ENCODE measurements at regions of chr2 and their contacts with region 1.

Region 1: GRCh38 chr2:39513641-39514094 is 76.6 kb upstream of the MAP4K3 start:
- DNase-seq: peak; percentile 84
- ATAC-seq: peak; percentile 83
- H3K4me3 Mint-ChIP-seq: peak overlapping the region; percentile 21
- H3K27ac Mint-ChIP-seq: peak overlapping the region; percentile 83
- H3K4me1 Mint-ChIP-seq: peaks cover 33% of the 10 kb centered on the region
- H3K27me3 Mint-ChIP-seq: peaks cover 3% of the 10 kb centered on the region

Region 2: GRCh38 chr2:39469807-39470206 is 43.9 kb before region 1 on chr2:
- CTCF ChIA-PET with region 1: no interaction called
- POLR2A ChIA-PET with region 1: no interaction called
- intact Hi-C with region 1: loop called in 1 of 2 experiments (anchors 2 kb)
- DNase-seq: peak; percentile 43
- ATAC-seq: peak; percentile 63
- H3K4me3 Mint-ChIP-seq: no peak overlapping the region
- H3K27ac Mint-ChIP-seq: no peak overlapping the region
- H3K4me1 Mint-ChIP-seq: peaks cover 36% of the 10 kb centered on the region
- H3K27me3 Mint-ChIP-seq: no peaks in the 10 kb centered on the region

Region 3: DNA sequence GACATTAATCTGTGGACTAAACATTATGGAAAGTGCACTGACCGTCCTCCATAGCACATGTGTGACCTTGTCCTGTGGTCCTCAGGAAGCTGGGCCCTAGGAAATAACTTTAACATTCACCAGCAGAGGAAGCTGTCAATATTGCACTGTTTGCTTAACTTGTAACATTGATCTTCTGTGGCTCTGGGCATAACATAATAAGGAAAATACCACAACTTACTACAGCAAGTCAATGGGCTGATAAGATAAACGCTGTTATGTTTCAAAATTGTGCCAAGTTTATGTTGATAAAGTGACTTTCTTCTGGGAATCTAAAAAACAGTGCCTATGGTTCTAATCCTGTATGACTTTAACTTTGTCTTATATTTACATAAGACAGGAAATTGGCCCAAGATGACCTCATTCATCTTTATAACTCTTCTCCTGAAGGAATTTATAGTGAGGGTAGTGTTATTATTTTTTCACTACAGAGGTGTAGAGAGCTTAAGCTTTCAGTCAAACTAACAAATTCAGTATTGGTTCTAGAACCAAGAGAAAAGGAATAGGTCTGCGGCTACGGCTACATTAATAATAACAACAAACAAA is 37.1 kb after region 1 on chr2:
- CTCF ChIA-PET with region 1: no interaction called
- POLR2A ChIA-PET with region 1: no interaction called
- intact Hi-C with region 1: no loop called
- DNase-seq: no peak
- ATAC-seq: no peak
- H3K4me3 Mint-ChIP-seq: no peak overlapping the region
- H3K27ac Mint-ChIP-seq: no peak overlapping the region
- H3K4me1 Mint-ChIP-seq: no peaks in the 10 kb centered on the region
- H3K27me3 Mint-ChIP-seq: no peaks in the 10 kb centered on the region

Region 4: DNA sequence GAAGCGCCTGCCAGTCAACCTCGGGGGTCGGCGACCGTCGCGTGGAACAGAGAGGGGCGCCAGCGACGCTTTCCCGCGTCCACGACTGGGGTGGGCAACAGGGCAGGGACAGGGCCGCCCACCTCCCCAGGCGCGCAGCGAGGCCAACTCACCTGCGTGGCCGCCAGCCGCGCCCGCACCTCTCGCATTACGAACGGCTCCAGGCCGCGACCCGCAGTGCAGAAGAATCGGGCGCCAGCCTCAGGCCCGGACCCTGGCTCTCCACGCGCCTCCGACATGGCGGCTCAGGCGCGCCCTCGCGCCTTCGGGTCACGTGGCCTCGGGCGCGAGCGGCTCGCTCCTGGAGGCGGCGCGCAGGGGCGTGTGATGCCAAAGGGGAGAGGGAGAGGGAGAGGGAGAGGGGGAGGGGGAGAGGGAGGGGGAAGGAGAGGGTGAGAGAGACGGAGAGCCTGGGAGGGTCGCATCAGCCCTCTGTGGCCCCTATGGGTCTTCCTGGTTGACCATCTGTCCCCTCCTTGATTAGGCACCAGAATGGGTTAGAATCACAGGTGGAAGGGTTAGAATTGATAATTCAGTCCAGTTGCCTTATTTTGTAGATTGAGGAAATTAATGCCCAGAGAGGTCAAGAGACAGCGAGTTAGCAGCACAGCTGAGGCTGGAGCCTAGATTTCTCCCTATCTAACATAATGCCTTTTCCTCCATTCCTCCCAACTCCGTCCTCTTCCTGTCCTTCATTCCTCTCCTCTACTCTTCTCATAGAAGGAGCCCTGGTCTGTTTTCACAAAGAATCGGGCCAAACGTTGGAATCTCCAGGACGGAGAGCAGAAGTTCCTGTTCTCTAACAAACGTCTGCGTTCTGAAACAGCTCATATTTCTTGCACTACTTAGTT is 265.5 kb after region 1 on chr2 and contains the start of gene THUMPD2:
- CTCF ChIA-PET with region 1: no interaction called
- POLR2A ChIA-PET with region 1: no interaction called
- intact Hi-C with region 1: loop called in 1 of 2 experiments (anchors 5 kb)
- DNase-seq: peak; percentile 84
- ATAC-seq: peak; percentile 77
- H3K4me3 Mint-ChIP-seq: peak within 1 kb of the TSS; percentile 87
- H3K27ac Mint-ChIP-seq: peak within 1 kb of the TSS; percentile 88
- H3K4me1 Mint-ChIP-seq: peaks cover 64% of the 10 kb centered on the region
- H3K27me3 Mint-ChIP-seq: no peaks in the 10 kb centered on the region
- total RNA-seq, gene THUMPD2: 15.2 to 18.4 TPM

Region 5: DNA sequence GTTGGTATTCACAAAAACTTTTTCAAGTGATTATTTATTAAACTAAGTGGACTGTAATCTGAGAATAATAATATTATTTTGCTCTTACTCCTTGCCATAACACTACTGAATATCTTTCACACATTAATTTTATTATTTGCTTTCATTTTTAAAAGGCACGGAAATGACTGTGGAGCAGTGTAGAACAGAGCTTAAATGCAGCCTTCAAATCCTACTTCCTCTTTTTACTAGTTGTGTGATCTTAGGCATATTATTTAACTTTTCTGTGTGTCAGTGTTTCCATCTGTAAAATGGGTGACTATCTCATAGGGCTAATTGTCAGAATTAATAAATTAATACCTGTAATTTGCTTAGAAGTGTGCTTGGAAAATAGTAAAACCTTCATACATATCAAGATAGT is 993.8 kb after region 1 on chr2:
- CTCF ChIA-PET with region 1: no interaction called
- POLR2A ChIA-PET with region 1: no interaction called
- intact Hi-C with region 1: no loop called
- DNase-seq: no peak
- ATAC-seq: no peak
- H3K4me3 Mint-ChIP-seq: no peak overlapping the region
- H3K27ac Mint-ChIP-seq: no peak overlapping the region
- H3K4me1 Mint-ChIP-seq: no peaks in the 10 kb centered on the region
- H3K27me3 Mint-ChIP-seq: no peaks in the 10 kb centered on the region